Mammary epithelial cell (primary cell): ENCODE measurements at regions of chr2 and their contacts with region 1.

Region 1: GRCh38 chr2:12721566-12722446 is 5.1 kb downstream of the TRIB2 start:
- DNase-seq: peak; percentile 69
- H3K4me3 ChIP-seq: peak overlapping the region; percentile 3 to 10 (median 10)
- H3K27ac ChIP-seq: peak overlapping the region; percentile 35
- H3K4me1 ChIP-seq: peaks cover 33% of the 10 kb centered on the region
- H3K27me3 ChIP-seq: no peaks in the 10 kb centered on the region
- CTCF ChIP-seq: no peak

Region 2: GRCh38 chr2:12819103-12819475 is 97.3 kb after region 1 on chr2:
- CTCF ChIA-PET with region 1: no interaction called
- dilution Hi-C with region 1: no loop called
- in situ Hi-C with region 1: no loop called
- intact Hi-C with region 1: loop called (anchors 2 kb)
- DNase-seq: peak; percentile 85
- H3K4me3 ChIP-seq: no peak overlapping the region
- H3K27ac ChIP-seq: no peak overlapping the region
- H3K4me1 ChIP-seq: peaks cover 39% of the 10 kb centered on the region
- H3K27me3 ChIP-seq: no peaks in the 10 kb centered on the region
- CTCF ChIP-seq: no peak